Right cardiac atrium (tissue), 5 donors: ENCODE measurements at regions of chr17 and their contacts with region 1.

Region 1: DNA sequence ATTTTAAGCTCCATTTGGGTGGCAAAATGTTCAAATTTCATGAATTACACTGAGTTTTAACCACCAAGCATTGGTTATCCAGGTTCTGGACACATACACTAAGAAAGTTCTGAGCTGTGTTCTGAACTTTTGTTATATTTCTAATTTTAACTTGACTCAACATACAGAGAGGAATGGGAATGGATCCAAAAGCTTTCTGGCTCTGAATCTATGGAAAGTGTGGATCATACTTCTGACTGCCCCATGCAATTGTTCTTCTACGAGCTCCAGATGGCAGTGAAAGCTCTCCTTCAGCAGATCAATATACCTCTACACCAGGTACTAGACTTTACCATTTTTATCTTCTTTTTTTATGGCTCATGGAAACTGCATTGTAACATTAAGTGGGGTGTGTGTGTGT is 113.0 kb upstream of the NOG start:
- DNase-seq: no peak
- ATAC-seq: no peak
- H3K4me3 ChIP-seq: no peak overlapping the region
- H3K27ac ChIP-seq: no peak overlapping the region
- H3K4me1 ChIP-seq: no peaks in the 10 kb centered on the region
- H3K27me3 ChIP-seq: peaks cover 2% of the 10 kb centered on the region

Region 2: DNA sequence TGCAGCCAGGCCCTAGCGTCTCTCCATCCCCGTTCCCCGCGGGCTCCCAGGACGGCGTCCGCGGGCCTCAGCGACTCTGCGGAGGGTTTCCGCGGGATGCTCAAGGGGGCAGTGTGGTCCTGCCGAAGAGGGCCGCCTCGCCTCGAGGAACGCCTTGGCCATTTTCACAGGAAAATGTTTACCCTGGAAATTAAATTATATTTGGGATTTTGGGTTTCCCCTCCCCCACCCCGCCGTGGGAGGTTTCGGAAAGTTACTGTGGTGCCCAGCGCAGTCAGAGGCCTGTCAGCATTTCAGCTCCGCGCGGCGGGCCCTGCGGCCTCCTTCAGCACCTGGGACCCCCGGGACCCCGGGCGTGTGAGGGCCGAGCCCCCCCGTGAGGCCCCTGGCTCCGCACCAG is 635.1 kb before region 1 on chr17:
- intact Hi-C with region 1: loop called in 2 of 4 experiments (anchors 5 to 10 kb)
- DNase-seq: peak; percentile 54 to 83 (median 83)
- ATAC-seq: peak; percentile 91 to 94
- H3K4me3 ChIP-seq: no peak overlapping the region
- H3K27ac ChIP-seq: no peak overlapping the region
- H3K4me1 ChIP-seq: no peaks in the 10 kb centered on the region
- H3K27me3 ChIP-seq: no peaks in the 10 kb centered on the region

Region 3: GRCh38 chr17:56880133-56880532 is 399.6 kb after region 1 on chr17:
- intact Hi-C with region 1: no loop called
- DNase-seq: no peak
- ATAC-seq: no peak
- H3K4me3 ChIP-seq: no peak overlapping the region
- H3K27ac ChIP-seq: no peak overlapping the region
- H3K4me1 ChIP-seq: no peaks in the 10 kb centered on the region
- H3K27me3 ChIP-seq: no peaks in the 10 kb centered on the region